PC-3 (cell line): ENCODE measurements at regions of chr12 and their contacts with region 1.

Region 1: GRCh38 chr12:29241821-29242591 is 92.9 kb downstream of the FAR2 start:
- DNase-seq: peak; percentile 100
- ATAC-seq: peak; percentile 84
- H3K4me3 ChIP-seq: peak overlapping the region; percentile 3; the same call in 1 of the 2 replicates
- H3K27ac ChIP-seq: peak overlapping the region; percentile 83
- H3K4me1 ChIP-seq: peaks cover 64% of the 10 kb centered on the region
- H3K27me3 ChIP-seq: no peaks in the 10 kb centered on the region
- CTCF ChIP-seq: peak; percentile 54

Region 2: GRCh38 chr12:29024117-29024516 is 217.9 kb before region 1 on chr12:
- CTCF ChIA-PET with region 1: no interaction called
- POLR2A ChIA-PET with region 1: no interaction called
- intact Hi-C with region 1: loop called (anchors 5 kb)
- DNase-seq: peak; percentile 61
- ATAC-seq: peak; percentile 61
- H3K4me3 ChIP-seq: no peak overlapping the region
- H3K27ac ChIP-seq: no peak overlapping the region
- H3K4me1 ChIP-seq: peaks cover 5% of the 10 kb centered on the region; the same call in 1 of the 2 replicates
- H3K27me3 ChIP-seq: no peaks in the 10 kb centered on the region
- CTCF ChIP-seq: peak; percentile 96

Region 3: DNA sequence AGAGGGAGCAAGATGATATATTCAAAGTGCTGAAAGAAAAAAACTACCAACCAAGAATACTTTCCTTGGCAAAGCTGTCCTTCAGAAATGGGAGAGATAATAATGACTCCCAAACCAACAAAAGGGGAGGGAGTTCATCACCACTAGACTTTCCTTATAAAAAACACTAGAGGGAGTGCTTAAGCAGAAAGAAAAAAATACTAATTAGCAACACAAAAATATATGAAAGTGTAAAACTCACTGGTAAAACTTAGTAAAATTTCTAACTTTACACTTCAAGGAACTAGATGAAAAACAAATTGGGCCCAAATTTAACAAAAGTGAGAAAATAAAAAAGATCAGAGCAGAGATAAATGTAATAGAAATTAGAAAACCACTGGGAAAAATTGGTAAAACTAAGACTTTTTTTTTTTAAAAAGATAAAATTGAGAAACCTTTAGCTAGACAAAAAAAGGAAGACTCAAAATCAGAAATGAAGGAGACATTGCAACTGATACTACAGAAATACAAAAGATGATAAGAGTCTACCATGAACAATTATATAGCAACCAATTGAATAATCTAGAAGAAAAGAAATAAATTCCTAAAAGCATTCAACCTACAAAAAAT is 153.3 kb before region 1 on chr12:
- CTCF ChIA-PET with region 1: interaction called, 5 read pairs
- POLR2A ChIA-PET with region 1: no interaction called
- intact Hi-C with region 1: loop called (anchors 1 kb)
- DNase-seq: peak; percentile 73
- ATAC-seq: peak; percentile 71
- H3K4me3 ChIP-seq: no peak overlapping the region
- H3K27ac ChIP-seq: no peak overlapping the region
- H3K4me1 ChIP-seq: no peaks in the 10 kb centered on the region
- H3K27me3 ChIP-seq: no peaks in the 10 kb centered on the region
- CTCF ChIP-seq: peak; percentile 98

Region 4: GRCh38 chr12:29301114-29301513 is 59.1 kb after region 1 on chr12:
- CTCF ChIA-PET with region 1: interaction called, 3 read pairs
- POLR2A ChIA-PET with region 1: no interaction called
- intact Hi-C with region 1: loop called (anchors 1 kb)
- DNase-seq: peak; percentile 48
- ATAC-seq: peak; percentile 91
- H3K4me3 ChIP-seq: no peak overlapping the region
- H3K27ac ChIP-seq: no peak overlapping the region
- H3K4me1 ChIP-seq: peaks cover 6% of the 10 kb centered on the region
- H3K27me3 ChIP-seq: no peaks in the 10 kb centered on the region
- CTCF ChIP-seq: no peak

Region 5: DNA sequence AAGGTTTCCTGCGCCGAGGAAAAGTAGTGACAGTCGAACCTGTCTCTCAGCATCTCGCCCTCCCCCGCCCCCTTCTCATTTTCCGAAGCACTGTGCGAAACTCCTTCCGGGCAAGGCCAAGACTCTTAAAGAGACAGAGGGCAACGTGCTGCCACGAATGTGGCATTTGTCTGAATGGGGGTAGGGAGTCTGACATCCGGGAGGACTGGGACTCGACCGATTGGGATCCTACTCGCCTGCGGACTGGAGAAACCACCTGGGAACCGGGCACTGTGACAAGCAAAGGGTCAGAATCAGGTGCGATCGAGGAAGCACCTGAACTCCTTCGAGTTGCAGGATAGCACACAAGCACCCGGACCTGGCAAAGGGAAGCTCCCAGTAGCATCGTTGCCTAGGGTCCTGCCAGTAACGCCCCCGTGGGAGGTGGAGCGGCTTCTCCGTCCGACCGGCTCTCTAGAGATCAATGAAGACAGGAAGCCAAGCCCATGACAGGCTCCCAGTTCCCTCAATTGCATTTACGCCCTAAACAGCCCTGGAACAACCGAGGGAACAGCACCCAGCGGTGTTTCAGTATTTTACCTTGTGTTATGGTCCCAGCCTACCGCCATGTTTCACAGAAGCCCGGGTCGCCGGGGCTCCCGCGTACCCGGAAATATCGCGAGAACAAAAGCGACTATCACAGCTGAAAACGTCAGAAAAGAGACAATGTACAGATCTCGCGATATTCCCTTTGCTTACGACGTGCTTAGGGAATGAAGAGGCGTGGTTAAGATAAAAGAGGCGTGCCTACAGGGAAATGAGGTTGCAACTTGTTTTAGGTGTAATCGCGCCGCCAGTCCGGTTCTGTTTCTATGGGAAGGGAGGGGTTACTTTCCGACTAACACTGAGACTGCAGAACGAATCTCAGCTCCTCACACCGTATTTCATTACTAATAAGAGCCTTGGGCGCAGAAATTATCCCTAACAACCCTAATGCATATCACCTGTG is 138.8 kb after region 1 on chr12 and contains the start of gene ERGIC2:
- CTCF ChIA-PET with region 1: no interaction called
- POLR2A ChIA-PET with region 1: no interaction called
- intact Hi-C with region 1: loop called (anchors 1 kb)
- DNase-seq: peak; percentile 100
- ATAC-seq: peak; percentile 94
- H3K4me3 ChIP-seq: peak within 1 kb of the TSS; percentile 77
- H3K27ac ChIP-seq: peak within 1 kb of the TSS; percentile 81
- H3K4me1 ChIP-seq: peaks cover 22% of the 10 kb centered on the region
- H3K27me3 ChIP-seq: no peaks in the 10 kb centered on the region
- CTCF ChIP-seq: no peak
- total RNA-seq, gene ERGIC2: 142 and 184 TPM in 2 replicates

Region 6: DNA sequence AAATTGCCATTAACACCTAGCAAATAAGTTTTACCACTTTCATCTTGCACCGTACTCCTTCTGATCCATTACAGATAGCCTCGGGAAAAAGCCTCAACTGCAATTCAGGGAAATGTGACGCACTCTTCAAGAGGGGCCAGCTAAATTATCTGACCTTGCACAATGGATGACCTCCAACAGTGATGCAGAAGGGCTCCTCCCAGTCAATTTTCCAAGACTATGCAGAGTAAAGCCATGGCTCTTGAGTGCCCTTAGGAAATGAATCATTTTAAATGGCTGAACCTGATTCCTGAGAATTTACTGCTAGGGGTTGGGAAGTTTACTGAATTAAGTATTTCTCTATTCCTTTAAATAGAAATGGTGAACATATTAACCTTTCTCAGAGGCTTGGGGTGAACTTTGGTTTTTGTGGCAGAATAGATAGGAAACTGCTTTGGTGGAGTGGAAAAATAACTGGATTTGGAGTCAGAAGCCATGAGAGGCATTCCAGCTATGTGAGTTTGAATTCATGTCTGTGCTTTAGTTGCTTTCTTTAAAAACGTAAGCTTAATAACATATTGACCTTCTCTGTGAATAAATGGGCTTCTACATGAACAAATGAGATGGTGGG is 320.3 kb after region 1 on chr12:
- CTCF ChIA-PET with region 1: no interaction called
- POLR2A ChIA-PET with region 1: no interaction called
- intact Hi-C with region 1: no loop called
- DNase-seq: no peak
- ATAC-seq: peak; percentile 7
- H3K4me3 ChIP-seq: no peak overlapping the region
- H3K27ac ChIP-seq: no peak overlapping the region
- H3K4me1 ChIP-seq: peaks cover 34% of the 10 kb centered on the region
- H3K27me3 ChIP-seq: peaks cover 8% of the 10 kb centered on the region
- CTCF ChIP-seq: no peak